Activated B cell treated with CpG ODN at 0.5 μM for 24 hours (primary cell): ENCODE measurements at regions of chr12 and their contacts with region 1.

Region 1: DNA sequence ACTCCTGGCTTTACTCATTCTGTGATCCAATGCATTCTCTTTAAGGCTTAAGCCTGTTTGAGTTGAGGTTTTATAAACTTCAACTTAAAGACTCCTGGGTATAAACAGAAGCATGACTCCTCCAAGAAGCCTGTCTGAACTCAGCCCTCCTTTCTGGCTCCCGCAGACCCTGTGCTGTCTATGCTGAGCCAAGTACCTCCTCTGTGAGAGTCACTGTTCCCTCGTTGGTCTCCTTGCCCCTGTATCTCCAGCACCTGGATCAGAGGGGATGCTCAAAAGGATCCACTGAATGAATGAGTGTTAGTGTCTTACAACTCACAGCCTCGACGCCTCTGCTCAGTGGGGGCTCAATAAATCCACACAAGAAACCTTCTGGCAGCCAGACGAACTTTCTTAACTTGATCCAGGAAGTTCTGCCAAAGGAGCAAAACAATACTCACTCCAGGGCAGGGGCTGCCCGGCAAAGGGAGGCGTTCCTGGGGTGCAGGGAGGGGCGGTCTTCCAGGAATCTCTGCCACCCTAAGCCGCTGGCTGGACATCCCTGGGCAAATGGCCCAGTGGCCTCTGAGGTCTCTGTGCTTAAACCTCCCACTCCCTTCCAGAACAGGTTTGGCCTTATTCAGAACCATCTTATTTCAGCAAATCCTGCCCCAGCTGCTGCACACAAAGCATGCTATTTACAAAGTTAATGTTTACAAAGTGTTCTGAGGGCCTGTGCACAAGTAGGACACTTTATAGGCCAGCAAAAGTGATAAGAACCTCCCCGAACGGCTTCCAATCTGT is 32.9 kb downstream of the MAP1LC3B2 start:
- DNase-seq: no peak
- ATAC-seq: no peak
- H3K4me3 Mint-ChIP-seq: no peak overlapping the region
- H3K27ac Mint-ChIP-seq: peak overlapping the region; percentile 64
- H3K4me1 Mint-ChIP-seq: peaks cover 44% of the 10 kb centered on the region
- H3K27me3 Mint-ChIP-seq: no peaks in the 10 kb centered on the region
- CTCF ChIP-seq: no peak

Region 2: DNA sequence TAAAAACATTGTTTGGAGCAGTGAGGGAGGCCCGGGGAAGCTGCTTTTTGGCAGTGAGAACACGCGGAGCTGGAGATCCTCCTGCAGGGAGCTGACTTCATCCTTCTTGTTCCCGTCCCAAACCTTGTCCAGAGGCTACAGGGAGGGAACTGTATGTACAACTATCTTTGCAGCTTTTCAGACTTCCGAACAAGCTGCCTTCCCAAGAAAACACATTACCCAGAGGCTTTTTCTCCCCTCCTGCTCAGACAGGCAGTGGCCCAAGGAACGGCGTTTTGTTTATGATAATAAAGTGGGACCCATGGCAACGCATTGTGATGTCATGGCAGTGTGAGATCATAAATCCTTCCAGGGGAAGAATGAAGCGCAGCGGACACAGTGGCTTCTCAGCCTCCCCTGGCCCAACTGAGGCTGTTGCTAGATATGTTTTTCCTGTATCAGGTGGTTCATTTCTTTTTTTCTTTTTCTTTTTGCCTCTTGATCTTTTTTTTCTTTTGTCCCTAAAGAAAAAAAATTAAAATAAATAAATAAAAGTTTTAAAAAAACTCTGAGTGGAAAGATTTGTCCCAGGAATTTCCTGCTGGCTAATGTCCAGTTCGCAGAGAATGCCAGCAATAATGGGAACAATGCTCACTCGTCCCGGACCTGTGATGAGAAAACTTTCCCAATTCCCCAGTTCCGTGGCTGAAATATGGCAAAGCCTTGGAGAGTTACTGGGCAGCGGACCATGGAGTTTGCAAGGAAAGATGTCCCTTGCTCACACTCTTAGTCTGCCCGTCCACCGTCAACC is 136.3 kb before region 1 on chr12:
- CTCF ChIA-PET with region 1: no interaction called
- POLR2A ChIA-PET with region 1: no interaction called
- intact Hi-C with region 1: loop called (anchors 5 kb)
- DNase-seq: no peak
- ATAC-seq: no peak
- H3K4me3 Mint-ChIP-seq: no peak overlapping the region
- H3K27ac Mint-ChIP-seq: no peak overlapping the region
- H3K4me1 Mint-ChIP-seq: peaks cover 38% of the 10 kb centered on the region
- H3K27me3 Mint-ChIP-seq: no peaks in the 10 kb centered on the region
- CTCF ChIP-seq: no peak

Region 3: DNA sequence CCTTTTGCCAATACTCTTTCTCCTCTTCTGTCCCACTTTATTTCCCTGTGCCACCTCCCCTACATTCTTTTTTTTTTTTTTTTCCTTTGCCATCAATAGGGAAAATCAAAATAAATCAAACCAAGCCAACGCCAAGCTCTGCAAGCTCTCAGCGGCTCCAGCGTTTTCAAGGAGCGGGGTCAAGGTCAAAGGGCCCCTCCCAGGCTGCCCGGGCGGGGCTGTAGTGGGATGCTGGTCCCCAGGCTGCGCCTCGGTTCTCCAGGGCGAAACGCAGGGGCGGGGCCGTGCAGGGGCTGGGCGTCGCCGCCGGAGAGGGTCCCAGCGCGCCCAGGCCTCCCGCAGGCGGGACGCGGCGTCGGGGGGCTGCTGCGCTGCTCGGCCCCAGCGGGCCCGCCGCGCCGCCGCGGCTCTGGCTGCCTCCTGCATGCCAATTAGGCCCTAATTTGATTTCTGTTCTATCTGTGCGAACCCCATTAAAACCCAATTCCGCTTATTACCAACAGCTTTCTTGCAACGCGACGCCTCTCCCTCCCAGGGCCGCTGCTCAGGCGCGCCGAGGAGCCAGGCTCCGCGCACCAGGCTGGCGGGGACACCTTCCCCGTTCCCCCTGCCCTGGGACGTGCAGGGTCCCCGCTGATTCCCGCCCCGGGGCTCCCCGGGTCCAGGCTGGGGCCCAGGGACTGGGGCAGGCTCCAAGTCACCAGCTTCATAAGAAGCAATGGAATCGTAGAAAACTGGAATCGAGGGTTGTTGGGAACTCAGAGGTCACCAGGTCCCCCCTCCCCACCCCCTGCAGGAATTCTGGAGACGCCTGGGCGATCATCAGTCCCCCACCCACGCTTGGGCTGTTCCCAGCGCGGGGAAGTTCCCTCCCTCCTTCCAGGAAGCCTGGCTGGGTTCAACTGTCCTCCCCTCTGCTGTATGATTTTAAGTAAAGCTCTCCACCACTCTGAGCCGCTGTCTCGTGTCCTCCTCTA is 83.6 kb before region 1 on chr12:
- CTCF ChIA-PET with region 1: no interaction called
- POLR2A ChIA-PET with region 1: no interaction called
- intact Hi-C with region 1: loop called (anchors 2 kb)
- DNase-seq: peak; percentile 57
- ATAC-seq: peak; percentile 94
- H3K4me3 Mint-ChIP-seq: peak overlapping the region; percentile 80
- H3K27ac Mint-ChIP-seq: no peak overlapping the region
- H3K4me1 Mint-ChIP-seq: peaks cover 8% of the 10 kb centered on the region
- H3K27me3 Mint-ChIP-seq: no peaks in the 10 kb centered on the region
- CTCF ChIP-seq: no peak

Region 4: GRCh38 chr12:116533343-116534251 is 58.4 kb before region 1 on chr12:
- CTCF ChIA-PET with region 1: no interaction called
- POLR2A ChIA-PET with region 1: interaction called, 3 read pairs
- intact Hi-C with region 1: loop called (anchors 1 kb)
- DNase-seq: peak; percentile 82
- ATAC-seq: peak; percentile 88
- H3K4me3 Mint-ChIP-seq: peak overlapping the region; percentile 96
- H3K27ac Mint-ChIP-seq: peak overlapping the region; percentile 68
- H3K4me1 Mint-ChIP-seq: peaks cover 53% of the 10 kb centered on the region
- H3K27me3 Mint-ChIP-seq: no peaks in the 10 kb centered on the region
- CTCF ChIP-seq: no peak

Region 5: GRCh38 chr12:116547955-116548501 is 44.0 kb before region 1 on chr12:
- CTCF ChIA-PET with region 1: no interaction called
- POLR2A ChIA-PET with region 1: no interaction called
- intact Hi-C with region 1: no loop called
- DNase-seq: peak; percentile 30
- ATAC-seq: peak; percentile 76
- H3K4me3 Mint-ChIP-seq: peak overlapping the region; percentile 42
- H3K27ac Mint-ChIP-seq: peak overlapping the region; percentile 57
- H3K4me1 Mint-ChIP-seq: peaks cover 17% of the 10 kb centered on the region
- H3K27me3 Mint-ChIP-seq: no peaks in the 10 kb centered on the region
- CTCF ChIP-seq: no peak

Region 6: GRCh38 chr12:116673681-116674111 is 81.7 kb after region 1 on chr12:
- CTCF ChIA-PET with region 1: interaction called, 3 read pairs
- POLR2A ChIA-PET with region 1: no interaction called
- intact Hi-C with region 1: loop called (anchors 5 kb)
- DNase-seq: no peak
- ATAC-seq: no peak
- H3K4me3 Mint-ChIP-seq: peak overlapping the region; percentile 13
- H3K27ac Mint-ChIP-seq: no peak overlapping the region
- H3K4me1 Mint-ChIP-seq: peaks cover 70% of the 10 kb centered on the region
- H3K27me3 Mint-ChIP-seq: no peaks in the 10 kb centered on the region
- CTCF ChIP-seq: no peak